ENCODE measurements at regions of chr2 and their contacts with region 1.

Region 1: DNA sequence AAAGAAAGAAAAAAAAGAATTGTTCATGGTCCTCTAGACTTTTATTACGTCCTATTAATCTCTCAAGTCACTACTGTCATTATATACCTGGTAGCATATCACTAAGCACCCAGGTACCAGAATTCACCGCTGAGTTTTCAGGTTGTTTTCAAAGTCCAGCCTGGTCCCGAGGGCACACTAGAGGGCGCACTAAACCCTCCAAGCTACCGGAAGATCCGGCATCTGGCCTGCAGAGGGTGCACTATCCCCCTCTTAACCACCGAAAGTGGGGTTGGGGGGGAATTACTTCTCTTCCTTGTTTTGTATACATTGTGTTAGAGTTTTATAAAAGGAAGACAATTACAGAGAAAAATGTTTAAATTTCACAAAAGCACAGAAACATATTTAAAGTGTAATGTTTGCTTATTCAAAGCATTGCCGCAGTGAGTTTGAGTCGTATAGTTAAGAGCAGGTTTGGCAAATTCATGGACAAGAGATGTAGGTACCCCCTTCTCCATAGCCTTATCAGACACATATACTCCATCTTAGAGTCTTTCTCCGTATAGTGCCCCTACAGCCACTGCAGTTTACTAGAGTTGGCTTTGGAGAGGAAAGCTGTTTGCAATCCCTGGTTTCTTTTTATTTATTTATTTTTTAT is 19.2 kb downstream of the MOGAT1 start:
- H3K4me3 ChIP-seq: no peak overlapping the region
- H3K27ac ChIP-seq: no peak overlapping the region
- H3K4me1 ChIP-seq: no peaks in the 10 kb centered on the region
- CTCF ChIP-seq: peak; percentile 82

Region 2: DNA sequence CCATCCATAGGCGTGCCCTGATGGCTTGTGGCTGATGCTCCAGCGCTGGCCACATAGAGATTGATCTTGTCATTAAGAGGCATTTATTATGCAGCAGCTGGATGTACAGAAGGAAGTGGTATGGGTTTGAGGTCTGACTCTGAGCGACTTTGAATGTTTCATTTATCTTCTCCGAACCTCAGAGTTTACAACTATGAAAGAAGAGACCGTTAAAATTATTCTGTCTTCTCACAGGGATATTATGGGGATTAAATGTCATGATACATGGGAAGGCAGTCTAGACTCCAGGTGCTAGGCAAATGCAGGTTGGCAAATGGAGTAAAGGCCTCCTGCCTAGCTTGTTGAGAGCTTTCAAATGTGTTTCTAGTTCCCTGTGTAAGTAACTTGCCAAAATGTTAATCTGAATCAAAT is 11.0 kb after region 1 on chr2:
- CTCF ChIA-PET with region 1: interaction called, 37 read pairs
- POLR2A ChIA-PET with region 1: no interaction called
- H3K4me3 ChIP-seq: no peak overlapping the region
- H3K27ac ChIP-seq: no peak overlapping the region
- H3K4me1 ChIP-seq: no peaks in the 10 kb centered on the region
- CTCF ChIP-seq: no peak

Region 3: DNA sequence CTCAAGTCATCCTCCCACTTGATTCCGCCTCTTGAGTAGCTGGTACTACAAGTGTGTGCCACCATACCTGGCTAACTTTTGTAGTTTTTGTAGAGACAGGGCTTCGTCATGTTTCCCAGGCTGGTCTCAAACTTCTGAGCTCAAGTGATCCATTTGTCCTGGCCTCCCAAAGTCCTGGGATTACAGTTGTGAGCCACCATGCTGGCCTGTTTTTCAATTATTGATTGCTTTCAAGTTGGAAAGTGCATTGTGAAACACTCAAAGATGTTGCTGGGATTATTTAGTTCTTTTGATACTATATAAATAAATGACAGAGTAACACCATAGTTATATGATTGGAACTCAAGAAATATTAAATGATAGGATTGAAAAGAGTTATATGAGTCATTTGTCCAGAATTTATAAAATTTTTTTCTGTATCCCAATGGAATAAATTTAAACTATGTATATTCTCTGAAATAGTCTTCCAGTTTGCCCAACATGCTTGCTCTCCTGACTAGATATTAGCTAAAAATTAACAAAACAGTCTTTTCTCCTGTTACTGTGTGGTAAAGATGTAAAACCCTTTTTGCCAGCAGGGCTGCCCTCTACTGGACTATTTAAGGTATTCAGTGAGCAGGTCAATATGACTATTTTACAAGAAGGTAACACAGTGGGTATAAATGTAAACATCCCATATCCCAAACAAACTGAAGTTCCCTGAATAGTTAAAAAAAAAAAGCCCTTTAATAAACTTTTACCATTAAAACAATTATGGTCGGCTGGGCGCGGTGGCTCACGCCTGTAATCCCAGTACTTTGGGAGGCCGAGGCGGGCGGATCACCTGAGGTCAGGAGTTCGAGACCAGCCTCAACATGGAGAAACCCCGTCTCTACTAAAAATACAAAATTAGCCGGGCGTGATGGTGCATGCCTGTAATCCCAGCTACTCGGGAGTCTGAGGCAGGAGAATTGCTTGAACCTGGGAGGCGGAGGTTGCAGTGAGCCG is 212.8 kb after region 1 on chr2:
- CTCF ChIA-PET with region 1: interaction called, 26 read pairs
- POLR2A ChIA-PET with region 1: no interaction called
- H3K4me3 ChIP-seq: no peak overlapping the region
- H3K27ac ChIP-seq: no peak overlapping the region
- H3K4me1 ChIP-seq: 0 out of 2 replicates have a peak, but pooled peaks cover 3% of the 10 kb centered on the region
- CTCF ChIP-seq: no peak

Region 4: GRCh38 chr2:222939208-222939856 is 248.7 kb after region 1 on chr2:
- CTCF ChIA-PET with region 1: interaction called, 25 read pairs
- POLR2A ChIA-PET with region 1: no interaction called
- H3K4me3 ChIP-seq: no peak overlapping the region
- H3K27ac ChIP-seq: no peak overlapping the region
- H3K4me1 ChIP-seq: no peaks in the 10 kb centered on the region
- CTCF ChIP-seq: peak; percentile 57

Measured in HEK293 (cell line).